Ascending aorta (tissue), 2 donors: ENCODE measurements at regions of chr9 and their contacts with region 1.

Region 1: GRCh38 chr9:95004411-95005277 is 278.1 kb downstream of the AOPEP start:
- DNase-seq: no peak
- H3K4me3 ChIP-seq: peak overlapping the region; percentile 81 to 83
- H3K27ac ChIP-seq: peak overlapping the region; percentile 99 to 100
- H3K4me1 ChIP-seq: peaks cover 0 to 24% of the 10 kb centered on the region in 2 donors
- H3K27me3 ChIP-seq: no peaks in the 10 kb centered on the region
- CTCF ChIP-seq: peak in 1 of 3 experiments; percentile 10

Region 2: GRCh38 chr9:94726495-94727191 is 278.0 kb before region 1 on chr9 and contains the start of gene AOPEP:
- intact Hi-C with region 1: loop called (anchors 5 kb)
- DNase-seq: peak; percentile 89 to 99
- H3K4me3 ChIP-seq: peak within 1 kb of the TSS; percentile 66 to 89
- H3K27ac ChIP-seq: peak within 1 kb of the TSS; percentile 83
- H3K4me1 ChIP-seq: peaks cover 0 to 9% of the 10 kb centered on the region in 2 donors
- H3K27me3 ChIP-seq: no peaks in the 10 kb centered on the region
- CTCF ChIP-seq: no peak
- total RNA-seq, gene AOPEP: 333 TPM

Region 3: DNA sequence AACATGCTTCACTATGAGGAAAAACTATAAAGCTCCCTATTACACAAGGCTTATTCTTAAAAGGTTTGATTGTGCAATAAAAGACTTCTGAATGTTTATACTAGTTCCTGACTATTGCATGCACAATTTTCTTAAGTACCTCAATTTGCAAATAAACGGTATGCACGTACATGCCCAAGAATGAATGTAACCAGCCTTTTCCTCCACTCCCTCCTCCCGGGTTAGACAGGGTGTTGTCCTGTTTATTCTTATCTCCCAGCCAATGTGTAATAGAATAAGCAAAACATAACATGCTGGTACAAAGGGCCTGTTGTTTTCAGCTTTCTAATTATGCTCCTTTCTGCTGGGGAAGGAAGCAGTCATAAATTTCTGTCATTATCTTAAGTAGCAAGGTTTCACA is 199.1 kb before region 1 on chr9:
- intact Hi-C with region 1: loop called (anchors 5 kb)
- DNase-seq: peak in 1 of 2 donors; percentile 71
- H3K4me3 ChIP-seq: no peak overlapping the region
- H3K27ac ChIP-seq: peak overlapping the region; percentile 94 to 96
- H3K4me1 ChIP-seq: peaks cover 35 to 82% of the 10 kb centered on the region in 2 donors
- H3K27me3 ChIP-seq: no peaks in the 10 kb centered on the region
- CTCF ChIP-seq: no peak

Region 4: GRCh38 chr9:94900222-94901018 is 104.2 kb before region 1 on chr9:
- intact Hi-C with region 1: loop called (anchors 10 kb)
- DNase-seq: peak in 1 of 2 donors; percentile 73
- H3K4me3 ChIP-seq: peak overlapping the region; percentile 28 to 45
- H3K27ac ChIP-seq: peak overlapping the region; percentile 84 to 90
- H3K4me1 ChIP-seq: peaks cover 9 to 44% of the 10 kb centered on the region in 2 donors
- H3K27me3 ChIP-seq: no peaks in the 10 kb centered on the region
- CTCF ChIP-seq: no peak

Region 5: DNA sequence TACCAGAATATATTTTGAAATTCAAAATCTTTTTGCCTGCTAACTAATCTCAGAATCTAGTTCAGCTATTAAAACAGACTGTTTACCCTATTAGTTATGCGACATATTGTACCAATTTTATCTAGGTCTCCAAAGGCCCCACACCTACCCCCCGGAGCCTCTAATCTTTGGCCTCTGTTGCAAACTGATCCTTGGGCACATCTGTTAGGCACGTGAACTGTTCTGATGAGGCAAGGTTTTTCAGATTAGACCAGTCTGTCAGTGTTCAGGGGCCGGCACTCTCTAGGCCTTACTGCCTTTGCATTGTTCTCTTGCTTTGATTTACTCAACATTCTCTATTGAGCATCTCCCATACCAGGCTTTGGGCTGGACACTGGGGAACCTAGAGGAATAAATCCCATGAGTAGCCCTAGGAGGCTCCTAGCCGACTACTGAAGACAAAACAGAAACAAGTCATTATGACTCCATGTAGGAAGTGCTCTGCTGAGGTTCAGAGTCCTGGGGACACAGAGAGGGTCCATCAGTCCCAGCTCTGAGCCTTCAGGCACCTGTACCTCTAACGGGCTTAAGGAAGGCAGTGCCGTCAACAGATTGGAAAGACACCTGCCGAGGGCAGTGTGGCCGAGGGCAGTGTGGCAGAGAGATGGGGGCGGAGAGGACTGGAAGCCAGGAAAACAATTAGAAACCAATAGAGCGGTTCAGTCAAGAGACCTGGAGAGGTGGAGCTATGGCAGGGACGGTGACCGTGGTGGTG is 33.1 kb before region 1 on chr9:
- intact Hi-C with region 1: no loop called
- DNase-seq: peak in 1 of 2 donors; percentile 48
- H3K4me3 ChIP-seq: no peak overlapping the region
- H3K27ac ChIP-seq: peak overlapping the region in 1 of 2 donors; percentile 67
- H3K4me1 ChIP-seq: peaks cover 4 to 28% of the 10 kb centered on the region in 2 donors
- H3K27me3 ChIP-seq: no peaks in the 10 kb centered on the region
- CTCF ChIP-seq: no peak

Region 6: GRCh38 chr9:95025213-95026147 is 20.8 kb after region 1 on chr9:
- intact Hi-C with region 1: loop called (anchors 2 kb)
- DNase-seq: peak in 1 of 2 donors; percentile 93
- H3K4me3 ChIP-seq: peak overlapping the region; percentile 27 to 45
- H3K27ac ChIP-seq: peak overlapping the region; percentile 81 to 99
- H3K4me1 ChIP-seq: peaks cover 26 to 89% of the 10 kb centered on the region in 2 donors
- H3K27me3 ChIP-seq: no peaks in the 10 kb centered on the region
- CTCF ChIP-seq: peak; percentile 45 to 52 (median 46)

Region 7: GRCh38 chr9:95078958-95079357 is 74.3 kb after region 1 on chr9:
- intact Hi-C with region 1: loop called (anchors 5 kb)
- DNase-seq: peak in 1 of 2 donors; percentile 76
- H3K4me3 ChIP-seq: peak overlapping the region; percentile 25 to 47
- H3K27ac ChIP-seq: peak overlapping the region; percentile 84 to 95
- H3K4me1 ChIP-seq: peaks cover 37 to 85% of the 10 kb centered on the region in 2 donors
- H3K27me3 ChIP-seq: no peaks in the 10 kb centered on the region
- CTCF ChIP-seq: no peak